ENCODE measurements at regions of chr11 and their contacts with region 1.

Region 1: GRCh38 chr11:12888525-12889158 is 120.5 kb upstream of the RASSF10 start:
- DNase-seq: peak; percentile 84
- H3K4me3 Mint-ChIP-seq: no peak overlapping the region
- H3K27ac Mint-ChIP-seq: no peak overlapping the region
- H3K4me1 Mint-ChIP-seq: no peaks in the 10 kb centered on the region
- H3K27me3 Mint-ChIP-seq: peaks cover 2% of the 10 kb centered on the region

Region 2: GRCh38 chr11:12288212-12288930 is 600.3 kb before region 1 on chr11:
- CTCF ChIA-PET with region 1: interaction called, 11 read pairs
- intact Hi-C with region 1: loop called (anchors 1 kb)
- DNase-seq: peak; percentile 70
- H3K4me3 Mint-ChIP-seq: no peak overlapping the region
- H3K27ac Mint-ChIP-seq: no peak overlapping the region
- H3K4me1 Mint-ChIP-seq: peaks cover 7% of the 10 kb centered on the region
- H3K27me3 Mint-ChIP-seq: no peaks in the 10 kb centered on the region

Region 3: DNA sequence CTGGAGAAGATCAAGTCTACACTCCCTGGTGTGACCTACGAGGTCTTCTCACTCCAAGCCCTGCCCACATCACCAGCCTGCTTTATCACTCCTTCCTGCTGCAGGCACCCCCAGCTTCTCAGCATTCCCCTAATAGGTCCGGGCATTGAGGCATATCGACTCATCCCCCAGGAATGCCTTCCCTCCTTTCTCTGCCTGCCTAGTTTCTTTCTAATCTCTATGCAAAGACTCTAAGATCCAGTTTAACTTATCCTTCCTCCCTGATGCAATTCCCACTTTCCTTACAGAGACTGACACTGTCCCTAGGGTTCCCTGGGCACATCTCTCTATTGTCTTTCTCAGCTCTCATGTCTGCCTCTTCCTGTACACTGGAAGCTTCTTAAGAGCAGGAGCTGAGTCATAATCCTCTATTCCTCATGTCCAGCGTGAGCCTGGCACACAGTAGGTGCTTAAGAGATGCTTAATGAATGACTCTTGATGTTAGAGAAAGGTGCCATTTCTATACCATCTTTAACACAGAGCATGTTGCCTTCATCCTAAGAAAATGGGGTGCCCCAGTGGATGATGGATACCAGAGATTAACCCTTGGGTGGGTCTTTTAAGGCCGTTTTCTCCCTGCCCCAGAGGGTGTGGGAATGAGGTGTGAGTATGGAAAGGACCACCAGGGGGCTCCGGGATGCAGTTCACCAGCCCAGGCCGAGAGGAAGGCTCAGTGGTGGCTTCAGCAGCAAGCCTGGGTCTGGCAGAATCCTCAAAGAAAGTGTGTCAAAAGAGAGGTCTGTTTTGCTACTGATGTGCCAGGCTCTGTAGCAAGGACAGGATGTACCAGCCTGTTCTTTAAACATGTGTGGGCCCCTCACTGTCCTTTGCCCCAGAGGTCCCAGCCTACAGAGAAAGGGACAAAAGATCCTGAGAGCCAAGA is 476.6 kb before region 1 on chr11:
- CTCF ChIA-PET with region 1: interaction called, 5 read pairs
- intact Hi-C with region 1: loop called (anchors 2 kb)
- DNase-seq: peak; percentile 55
- H3K4me3 Mint-ChIP-seq: no peak overlapping the region
- H3K27ac Mint-ChIP-seq: no peak overlapping the region
- H3K4me1 Mint-ChIP-seq: no peaks in the 10 kb centered on the region
- H3K27me3 Mint-ChIP-seq: no peaks in the 10 kb centered on the region

Region 4: DNA sequence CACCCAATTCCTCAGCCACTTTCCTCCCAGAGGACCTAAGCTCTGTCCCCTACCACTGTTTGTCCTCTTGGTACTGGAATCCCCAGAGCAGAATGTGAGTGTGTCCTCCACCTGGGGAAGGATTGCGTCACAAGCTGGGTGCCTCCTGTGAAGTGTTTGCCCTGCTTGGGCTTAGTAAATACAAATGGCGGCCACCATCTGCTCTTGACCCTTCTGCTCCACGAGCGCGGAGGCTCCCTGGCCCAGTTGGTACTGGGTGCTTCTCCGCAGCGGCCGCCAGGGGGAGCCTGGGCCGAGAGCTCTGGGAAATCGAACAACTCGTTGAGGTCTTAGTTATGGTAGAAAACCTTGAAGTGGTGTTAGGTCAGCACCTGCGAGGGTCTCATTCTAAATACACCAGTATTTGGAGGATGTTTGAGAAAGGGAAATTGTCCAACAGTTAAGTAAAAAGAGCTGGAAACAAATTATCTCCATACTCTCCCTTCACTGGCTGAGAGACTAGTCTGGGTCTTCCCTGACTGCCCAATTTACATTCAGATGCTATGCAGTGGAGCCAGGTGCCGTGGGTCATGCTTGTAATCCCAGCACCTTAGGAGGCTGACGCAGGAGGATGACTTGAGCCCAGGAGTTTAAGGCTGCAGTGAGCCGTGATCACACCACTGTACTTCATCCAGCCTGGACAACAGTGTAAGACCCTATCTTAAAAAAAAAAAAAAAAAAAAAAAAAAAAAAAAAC is 289.1 kb before region 1 on chr11:
- CTCF ChIA-PET with region 1: interaction called, 20 read pairs
- intact Hi-C with region 1: loop called (anchors 1 kb)
- DNase-seq: peak; percentile 58
- H3K4me3 Mint-ChIP-seq: no peak overlapping the region
- H3K27ac Mint-ChIP-seq: no peak overlapping the region
- H3K4me1 Mint-ChIP-seq: peaks cover 14% of the 10 kb centered on the region
- H3K27me3 Mint-ChIP-seq: peaks cover 18% of the 10 kb centered on the region

Region 5: GRCh38 chr11:13494051-13494450 is 605.4 kb after region 1 on chr11:
- CTCF ChIA-PET with region 1: no interaction called
- intact Hi-C with region 1: no loop called
- DNase-seq: no peak
- H3K4me3 Mint-ChIP-seq: no peak overlapping the region
- H3K27ac Mint-ChIP-seq: no peak overlapping the region
- H3K4me1 Mint-ChIP-seq: no peaks in the 10 kb centered on the region
- H3K27me3 Mint-ChIP-seq: peaks cover 7% of the 10 kb centered on the region

Measured in activated naive CD4-positive, alpha-beta T cell treated with anti-CD3 and anti-CD28 coated beads for 36 hours (primary cell).